ENCODE measurements at regions of chr14 and their contacts with region 1.

Region 1: DNA sequence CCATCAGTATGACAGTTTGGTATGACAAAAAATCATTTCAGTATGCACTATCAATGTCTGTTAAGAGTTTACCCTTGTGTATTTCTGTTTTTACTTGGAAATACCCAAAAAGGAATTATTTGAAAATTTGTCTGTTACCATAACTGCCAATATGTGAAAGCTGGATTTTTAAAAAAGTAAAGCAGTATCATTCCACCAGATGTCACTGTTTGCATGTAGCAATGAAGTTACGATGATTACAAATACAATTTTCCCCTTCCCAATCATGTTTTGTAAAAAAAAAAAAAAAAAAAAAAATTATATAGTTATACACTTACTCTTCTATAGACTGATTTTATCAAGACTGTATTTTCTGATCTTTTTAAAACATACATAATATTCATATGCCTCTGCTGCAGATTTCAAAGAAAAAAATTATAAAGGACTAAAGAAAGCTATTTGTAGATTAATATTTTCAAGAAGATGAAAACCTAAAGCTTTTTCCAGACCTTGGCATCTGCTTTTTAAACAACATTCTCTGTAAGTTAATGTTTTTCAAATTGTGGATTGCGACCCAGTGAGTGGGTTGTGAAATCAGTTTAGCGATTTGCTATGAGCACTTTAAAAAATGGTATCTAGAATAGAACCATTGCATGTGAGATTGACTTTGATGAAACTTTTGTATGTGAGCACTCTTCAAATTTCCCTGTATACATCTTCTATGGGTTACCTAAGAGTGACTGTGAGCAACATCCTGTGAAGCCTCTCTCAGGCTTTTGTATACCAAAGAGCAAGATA is 114.2 kb downstream of the TTC6 start:
- DNase-seq: peak; percentile 70
- ATAC-seq: no peak
- H3K4me3 ChIP-seq: no peak overlapping the region
- H3K27ac ChIP-seq: no peak overlapping the region
- H3K4me1 ChIP-seq: peaks cover 39% of the 10 kb centered on the region
- H3K27me3 ChIP-seq: no peaks in the 10 kb centered on the region
- CTCF ChIP-seq: peak; percentile 75
- EP300 ChIP-seq: no peak
- POLR2A ChIP-seq: no peak
- RAD21 ChIP-seq: peak; percentile 80

Region 2: DNA sequence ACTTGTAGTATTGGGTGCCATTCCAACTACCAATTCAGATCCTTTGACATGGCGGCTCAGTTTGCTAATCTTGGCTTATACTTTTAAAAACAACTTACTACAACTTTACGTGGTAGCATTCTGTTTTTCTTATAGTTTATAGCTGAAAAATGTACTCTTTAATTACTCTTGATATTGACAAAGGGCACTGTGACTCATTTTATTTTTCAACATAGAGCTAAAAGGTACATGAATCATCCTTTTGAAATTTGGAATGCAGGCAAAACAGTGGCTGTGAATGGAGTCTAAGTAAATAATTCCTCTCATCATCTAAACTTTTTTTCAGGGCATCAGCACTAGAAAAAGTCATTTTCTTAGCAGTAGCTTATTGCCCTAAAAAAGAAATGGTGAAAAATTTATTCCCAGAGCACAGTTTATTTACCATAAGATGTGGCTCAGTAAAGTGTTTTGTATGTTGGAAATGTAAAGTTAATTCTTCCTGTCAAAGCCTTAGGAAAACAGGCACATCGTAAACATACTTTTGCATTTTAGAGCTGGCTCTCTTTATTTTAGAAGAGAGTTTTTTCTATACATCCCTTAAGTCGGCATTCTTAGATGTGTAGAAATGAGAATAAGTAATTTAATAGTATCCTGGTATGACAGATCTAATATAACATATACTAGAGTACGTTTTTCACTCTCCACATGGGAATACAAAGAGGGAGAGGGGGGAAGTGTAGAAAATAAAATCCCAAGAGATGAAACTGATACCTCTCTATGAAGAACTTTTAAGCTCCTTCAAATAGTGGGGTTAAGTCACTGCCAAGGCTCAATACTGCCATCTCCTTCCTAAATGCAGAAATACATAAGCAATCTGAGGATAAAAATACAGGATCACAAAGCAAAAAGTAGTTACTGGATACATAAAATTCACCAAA is 592.4 kb before region 1 on chr14:
- CTCF ChIA-PET with region 1: no interaction called
- POLR2A ChIA-PET with region 1: no interaction called
- in situ Hi-C with region 1: no loop called
- intact Hi-C with region 1: no loop called
- DNase-seq: peak; percentile 39
- ATAC-seq: no peak
- H3K4me3 ChIP-seq: no peak overlapping the region
- H3K27ac ChIP-seq: no peak overlapping the region
- H3K4me1 ChIP-seq: no peaks in the 10 kb centered on the region
- H3K27me3 ChIP-seq: no peaks in the 10 kb centered on the region
- CTCF ChIP-seq: 0 out of 2 replicates have a peak, but pooled peaks have one; percentile 2
- EP300 ChIP-seq: no peak
- POLR2A ChIP-seq: no peak
- RAD21 ChIP-seq: no peak

Region 3: DNA sequence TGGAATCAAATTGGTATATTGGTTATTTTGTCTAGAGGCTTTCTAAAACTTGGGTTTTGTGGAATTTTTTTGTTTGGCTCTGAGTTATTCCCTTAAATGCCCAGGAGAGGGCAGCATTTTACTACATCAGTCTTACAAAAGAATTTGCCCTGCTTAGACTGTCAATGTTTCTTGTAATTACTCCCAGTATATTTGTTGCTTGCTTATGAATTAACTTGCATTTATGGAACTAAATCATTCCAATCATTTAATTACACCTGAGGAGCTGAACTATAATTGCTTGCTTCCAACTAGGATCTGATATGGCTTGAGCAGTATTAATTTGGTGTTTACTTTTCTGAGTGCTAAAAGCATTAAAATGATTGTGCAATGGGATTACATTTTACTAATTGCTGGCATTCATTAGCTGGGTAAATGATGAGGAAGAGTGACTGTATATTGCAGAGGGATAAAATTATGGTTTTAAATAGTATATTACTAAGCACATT is 463.1 kb before region 1 on chr14:
- CTCF ChIA-PET with region 1: interaction called, 8 read pairs
- POLR2A ChIA-PET with region 1: no interaction called
- in situ Hi-C with region 1: loop called (anchors 10 kb)
- intact Hi-C with region 1: loop called (anchors 1 kb)
- DNase-seq: peak; percentile 86
- ATAC-seq: peak; percentile 79
- H3K4me3 ChIP-seq: no peak overlapping the region
- H3K27ac ChIP-seq: no peak overlapping the region
- H3K4me1 ChIP-seq: peaks cover 33% of the 10 kb centered on the region
- H3K27me3 ChIP-seq: no peaks in the 10 kb centered on the region
- CTCF ChIP-seq: peak; percentile 88
- EP300 ChIP-seq: peak in 1 of 2 experiments; percentile 37; a peak in 1 of 4 replicates
- POLR2A ChIP-seq: no peak
- RAD21 ChIP-seq: peak; percentile 93

Region 4: DNA sequence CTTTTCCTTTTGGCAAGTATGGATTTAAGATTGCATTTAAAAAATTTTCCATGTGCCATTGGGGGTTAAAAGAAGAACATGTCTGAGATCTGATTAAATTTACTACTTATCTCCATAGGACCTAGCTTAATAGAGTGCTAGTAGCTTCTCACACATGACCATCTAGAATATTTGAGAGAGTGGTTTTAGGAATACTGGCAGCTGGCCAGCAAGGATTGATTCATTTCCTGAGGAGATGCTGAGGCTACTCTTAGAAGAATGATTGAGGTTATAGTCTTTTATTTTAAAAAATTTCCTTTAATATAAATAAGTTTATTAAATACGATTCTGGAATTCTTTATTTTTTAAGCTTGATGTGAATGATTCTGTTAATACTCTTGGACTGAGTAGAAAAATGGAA is 455.7 kb before region 1 on chr14:
- CTCF ChIA-PET with region 1: no interaction called
- POLR2A ChIA-PET with region 1: no interaction called
- in situ Hi-C with region 1: loop called (anchors 10 kb)
- intact Hi-C with region 1: loop called (anchors 1 kb)
- DNase-seq: no peak
- ATAC-seq: no peak
- H3K4me3 ChIP-seq: no peak overlapping the region
- H3K27ac ChIP-seq: no peak overlapping the region
- H3K4me1 ChIP-seq: peaks cover 29% of the 10 kb centered on the region
- H3K27me3 ChIP-seq: no peaks in the 10 kb centered on the region
- CTCF ChIP-seq: no peak
- EP300 ChIP-seq: no peak
- POLR2A ChIP-seq: no peak
- RAD21 ChIP-seq: no peak

Region 5: GRCh38 chr14:38016497-38016896 is 306.9 kb after region 1 on chr14:
- CTCF ChIA-PET with region 1: interaction called, 3 read pairs
- POLR2A ChIA-PET with region 1: no interaction called
- in situ Hi-C with region 1: loop called (anchors 25 kb)
- intact Hi-C with region 1: loop called (anchors 2 kb)
- DNase-seq: peak; percentile 41
- ATAC-seq: peak; percentile 95
- H3K4me3 ChIP-seq: no peak overlapping the region
- H3K27ac ChIP-seq: no peak overlapping the region
- H3K4me1 ChIP-seq: no peaks in the 10 kb centered on the region
- H3K27me3 ChIP-seq: no peaks in the 10 kb centered on the region
- CTCF ChIP-seq: peak; percentile 55
- EP300 ChIP-seq: no peak
- POLR2A ChIP-seq: no peak
- RAD21 ChIP-seq: no peak

Region 6: DNA sequence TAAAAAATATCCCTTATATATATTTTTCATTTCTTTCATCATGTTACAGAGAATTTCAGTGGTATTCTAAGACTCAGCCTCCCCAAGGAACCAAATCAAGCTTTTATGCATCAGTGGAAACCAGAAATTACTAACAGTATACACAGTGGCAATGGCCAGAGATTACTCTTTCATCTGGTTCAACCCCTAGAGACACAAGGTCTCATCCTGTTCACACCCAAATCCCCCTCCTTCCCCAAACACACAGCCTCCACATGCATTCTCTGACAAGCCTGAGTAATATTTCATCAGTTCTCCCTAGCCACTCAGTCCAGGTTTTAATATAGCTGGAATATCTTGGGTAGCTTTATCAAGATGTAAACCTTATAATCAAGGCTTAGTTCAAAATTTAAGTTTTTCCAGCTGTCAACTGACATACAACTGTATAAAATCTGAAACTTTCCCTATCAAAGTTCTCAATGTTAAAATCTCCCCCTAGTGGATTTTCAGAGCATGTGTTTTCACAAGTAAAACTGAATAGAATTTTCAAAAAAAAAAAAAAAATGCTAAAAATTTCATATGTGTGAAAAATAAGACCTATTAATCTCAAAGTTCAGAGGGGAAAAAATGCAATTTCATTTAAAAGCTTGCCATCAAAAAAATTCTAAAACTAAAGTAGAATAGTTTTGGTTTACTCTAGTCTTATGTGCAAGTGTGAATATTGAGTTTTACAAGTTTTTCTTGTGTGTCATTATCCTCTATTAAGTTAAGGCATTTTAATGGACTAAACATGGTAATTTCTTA is 487.6 kb after region 1 on chr14:
- CTCF ChIA-PET with region 1: interaction called, 3 read pairs
- POLR2A ChIA-PET with region 1: no interaction called
- in situ Hi-C with region 1: loop called (anchors 10 kb)
- intact Hi-C with region 1: loop called (anchors 5 kb)
- DNase-seq: no peak
- ATAC-seq: peak; percentile 57; the same call in 2 of the 3 replicates
- H3K4me3 ChIP-seq: no peak overlapping the region
- H3K27ac ChIP-seq: no peak overlapping the region
- H3K4me1 ChIP-seq: no peaks in the 10 kb centered on the region
- H3K27me3 ChIP-seq: no peaks in the 10 kb centered on the region; a peak in 1 of 5 replicates
- CTCF ChIP-seq: peak; percentile 29; the same call in 1 of the 2 replicates
- EP300 ChIP-seq: no peak
- POLR2A ChIP-seq: no peak
- RAD21 ChIP-seq: no peak

Region 7: DNA sequence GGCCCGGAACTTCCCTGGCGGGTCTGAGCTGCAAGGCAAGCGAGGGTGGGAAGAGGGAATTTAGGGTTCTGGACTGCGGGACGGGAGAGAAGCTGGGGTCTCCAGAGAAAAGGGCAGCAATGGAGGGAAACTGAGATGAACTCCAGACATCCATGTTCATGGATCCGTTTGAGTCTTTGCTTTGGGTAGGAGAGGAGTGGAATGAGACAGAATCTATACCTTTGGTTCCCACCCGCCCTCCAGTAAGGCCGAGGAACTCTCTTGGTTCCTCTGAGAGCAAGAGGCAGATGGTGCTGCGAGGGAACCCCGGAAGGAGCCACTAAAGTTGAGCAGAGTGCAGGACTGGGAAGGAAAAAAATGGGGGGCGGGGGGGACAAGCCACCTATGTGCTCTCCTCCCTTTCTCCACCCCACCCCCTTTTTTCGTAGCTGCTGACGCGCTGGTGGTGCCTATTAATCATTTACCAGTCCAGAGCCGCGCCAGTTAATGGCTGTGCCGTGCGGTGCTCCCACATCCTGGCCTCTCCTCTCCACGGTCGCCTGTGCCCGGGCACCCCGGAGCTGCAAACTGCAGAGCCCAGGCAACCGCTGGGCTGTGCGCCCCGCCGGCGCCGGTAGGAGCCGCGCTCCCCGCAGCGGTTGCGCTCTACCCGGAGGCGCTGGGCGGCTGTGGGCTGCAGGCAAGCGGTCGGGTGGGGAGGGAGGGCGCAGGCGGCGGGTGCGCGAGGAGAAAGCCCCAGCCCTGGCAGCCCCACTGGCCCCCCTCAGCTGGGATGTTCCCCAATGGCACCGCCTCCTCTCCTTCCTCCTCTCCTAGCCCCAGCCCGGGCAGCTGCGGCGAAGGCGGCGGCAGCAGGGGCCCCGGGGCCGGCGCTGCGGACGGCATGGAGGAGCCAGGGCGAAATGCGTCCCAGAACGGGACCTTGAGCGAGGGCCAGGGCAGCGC is 499.3 kb after region 1 on chr14:
- CTCF ChIA-PET with region 1: no interaction called
- POLR2A ChIA-PET with region 1: no interaction called
- in situ Hi-C with region 1: loop called (anchors 10 kb)
- intact Hi-C with region 1: no loop called
- DNase-seq: peak; percentile 33
- ATAC-seq: peak; percentile 89
- H3K4me3 ChIP-seq: peak overlapping the region; percentile 13 to 47 (median 25); a peak in 5 of 6 replicates
- H3K27ac ChIP-seq: no peak overlapping the region
- H3K4me1 ChIP-seq: peaks cover 15% of the 10 kb centered on the region
- H3K27me3 ChIP-seq: peaks cover 5 to 47% of the 10 kb centered on the region in 2 experiments
- CTCF ChIP-seq: peak; percentile 50
- EP300 ChIP-seq: no peak
- POLR2A ChIP-seq: no peak
- RAD21 ChIP-seq: no peak